HepG2 (cell line): ENCODE measurements at regions of chr7 and their contacts with region 1.

Region 1: GRCh38 chr7:82410461-82410860 is 33.1 kb downstream of the CACNA2D1 start:
- DNase-seq: no peak
- ATAC-seq: no peak
- H3K4me3 ChIP-seq: no peak overlapping the region
- H3K27ac ChIP-seq: no peak overlapping the region
- H3K4me1 ChIP-seq: no peaks in the 10 kb centered on the region
- H3K27me3 ChIP-seq: no peaks in the 10 kb centered on the region
- CTCF ChIP-seq: no peak
- EP300 ChIP-seq: no peak
- POLR2A ChIP-seq: no peak
- RAD21 ChIP-seq: no peak

Region 2: GRCh38 chr7:82373926-82374640 is 36.4 kb before region 1 on chr7:
- CTCF ChIA-PET with region 1: no interaction called
- POLR2A ChIA-PET with region 1: no interaction called
- in situ Hi-C with region 1: no loop called
- intact Hi-C with region 1: no loop called
- DNase-seq: no peak
- ATAC-seq: no peak
- H3K4me3 ChIP-seq: no peak overlapping the region
- H3K27ac ChIP-seq: no peak overlapping the region
- H3K4me1 ChIP-seq: no peaks in the 10 kb centered on the region
- H3K27me3 ChIP-seq: no peaks in the 10 kb centered on the region
- CTCF ChIP-seq: no peak
- EP300 ChIP-seq: no peak
- POLR2A ChIP-seq: no peak
- RAD21 ChIP-seq: no peak

Region 3: GRCh38 chr7:82393076-82393839 is 17.2 kb before region 1 on chr7:
- CTCF ChIA-PET with region 1: no interaction called
- POLR2A ChIA-PET with region 1: no interaction called
- in situ Hi-C with region 1: no loop called
- intact Hi-C with region 1: loop called (anchors 1 kb)
- DNase-seq: no peak
- ATAC-seq: no peak
- H3K4me3 ChIP-seq: no peak overlapping the region
- H3K27ac ChIP-seq: no peak overlapping the region
- H3K4me1 ChIP-seq: no peaks in the 10 kb centered on the region
- H3K27me3 ChIP-seq: no peaks in the 10 kb centered on the region
- CTCF ChIP-seq: no peak
- EP300 ChIP-seq: no peak
- POLR2A ChIP-seq: no peak
- RAD21 ChIP-seq: no peak